Aorta (tissue), 5 donors: ENCODE measurements at regions of chr5 and their contacts with region 1.

Region 1: GRCh38 chr5:181260387-181261319 is at the start of gene TRIM52:
- DNase-seq: peak; percentile 95 to 97
- ATAC-seq: peak; percentile 97
- H3K4me3 ChIP-seq: peak within 1 kb of the TSS; percentile 44 to 93
- H3K27ac ChIP-seq: peak within 1 kb of the TSS; percentile 75 to 98
- H3K4me1 ChIP-seq: no peaks in the 10 kb centered on the region
- H3K27me3 ChIP-seq: no peaks in the 10 kb centered on the region
- total RNA-seq, gene TRIM52: 11.9 to 18.7 TPM

Region 2: DNA sequence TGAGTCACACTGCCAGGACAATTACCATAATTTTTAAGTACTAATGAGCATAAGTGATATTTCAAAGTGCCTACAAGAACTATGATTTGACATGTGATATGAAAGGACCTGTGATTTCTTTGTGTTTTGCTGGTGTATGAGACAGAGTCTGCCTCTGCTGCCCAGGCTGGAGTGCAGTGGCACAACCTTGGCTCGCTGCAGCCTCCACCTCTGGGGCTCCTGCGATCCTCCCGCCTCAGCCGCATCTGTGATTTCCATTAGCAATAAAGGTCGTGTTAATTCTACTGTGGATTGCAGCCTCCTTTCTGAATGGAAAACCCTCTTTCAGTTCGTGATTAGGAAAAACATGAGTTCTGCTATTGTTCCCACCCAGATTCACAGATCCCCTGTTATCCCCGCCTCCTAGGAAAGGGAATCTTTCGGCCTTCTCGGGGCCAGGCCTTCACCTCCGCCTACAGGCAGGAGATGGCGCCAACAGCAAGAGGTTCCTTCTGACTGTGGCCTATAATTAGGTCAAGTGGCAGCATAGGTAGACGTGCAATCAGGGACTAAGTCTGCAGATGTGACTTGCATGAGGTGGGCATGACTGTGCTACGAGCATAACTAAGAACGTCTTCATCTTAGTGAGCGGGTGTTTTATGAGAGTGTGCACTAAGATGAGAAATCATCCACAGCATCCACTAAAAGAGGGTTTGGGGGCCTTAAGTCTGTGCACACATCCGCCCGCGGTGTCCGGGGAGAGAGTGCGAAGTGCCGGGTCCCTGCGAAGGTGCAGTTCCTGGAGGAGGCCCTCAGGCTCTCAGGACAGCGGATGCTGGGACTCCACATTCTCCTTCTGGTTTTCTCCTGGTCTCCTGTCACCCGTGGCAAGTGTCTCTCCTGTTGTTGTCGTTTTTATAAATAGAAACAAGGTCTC is 78.7 kb before region 1 on chr5:
- intact Hi-C with region 1: loop called in 1 of 2 experiments (anchors 10 kb)
- DNase-seq: peak; percentile 78 to 82
- ATAC-seq: peak; percentile 81
- H3K4me3 ChIP-seq: no peak overlapping the region
- H3K27ac ChIP-seq: no peak overlapping the region
- H3K4me1 ChIP-seq: no peaks in the 10 kb centered on the region
- H3K27me3 ChIP-seq: no peaks in the 10 kb centered on the region